ENCODE measurements at regions of chr11 and their contacts with region 1.

Region 1: GRCh38 chr11:32069361-32070058 is 21.4 kb upstream of the RCN1 start:
- DNase-seq: no peak
- H3K4me3 ChIP-seq: no peak overlapping the region
- H3K27ac ChIP-seq: no peak overlapping the region
- H3K27me3 ChIP-seq: peaks cover 7% of the 10 kb centered on the region
- CTCF ChIP-seq: no peak

Region 2: GRCh38 chr11:31810779-31811647 is 258.5 kb before region 1 on chr11 and contains the start of gene PAX6:
- in situ Hi-C with region 1: no loop called
- DNase-seq: peak; percentile 9
- H3K4me3 ChIP-seq: peak within 1 kb of the TSS; percentile 41
- H3K27ac ChIP-seq: no peak within 1 kb of the TSS
- H3K27me3 ChIP-seq: peaks cover 95% of the 10 kb centered on the region
- CTCF ChIP-seq: no peak

Region 3: DNA sequence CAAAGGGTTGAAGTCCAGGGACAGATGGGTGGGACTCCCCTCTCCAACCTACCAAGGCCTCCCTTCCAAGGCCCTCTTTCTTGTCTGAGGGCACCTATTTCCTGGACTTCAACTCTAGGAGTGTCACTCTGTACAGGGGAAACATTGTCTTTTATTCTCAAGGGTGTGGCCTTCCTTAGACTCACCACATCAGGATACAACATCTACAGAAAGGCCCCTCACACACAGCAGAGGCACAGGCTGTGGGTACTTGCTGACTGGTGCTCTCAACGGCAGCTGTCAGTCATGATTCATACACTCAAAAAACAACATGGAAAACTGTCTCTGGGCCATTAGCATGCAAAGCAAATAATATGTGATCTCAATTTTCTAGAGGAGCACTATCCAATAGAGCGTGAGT is 99.4 kb after region 1 on chr11:
- in situ Hi-C with region 1: loop called (anchors 10 kb)
- DNase-seq: no peak
- H3K4me3 ChIP-seq: no peak overlapping the region
- H3K27ac ChIP-seq: no peak overlapping the region
- H3K27me3 ChIP-seq: no peaks in the 10 kb centered on the region
- CTCF ChIP-seq: no peak

Measured in brain microvascular endothelial cell (primary cell).